ENCODE measurements at regions of chr2 and their contacts with region 1.

Region 1: GRCh38 chr2:109128048-109128465 is 948 bp upstream of the SH3RF3 start:
- DNase-seq: peak; percentile 81
- H3K4me3 ChIP-seq: peak overlapping the region; percentile 84
- H3K27ac ChIP-seq: peak overlapping the region; percentile 38
- H3K27me3 ChIP-seq: peaks cover 2% of the 10 kb centered on the region
- CTCF ChIP-seq: peak; percentile 93

Region 2: DNA sequence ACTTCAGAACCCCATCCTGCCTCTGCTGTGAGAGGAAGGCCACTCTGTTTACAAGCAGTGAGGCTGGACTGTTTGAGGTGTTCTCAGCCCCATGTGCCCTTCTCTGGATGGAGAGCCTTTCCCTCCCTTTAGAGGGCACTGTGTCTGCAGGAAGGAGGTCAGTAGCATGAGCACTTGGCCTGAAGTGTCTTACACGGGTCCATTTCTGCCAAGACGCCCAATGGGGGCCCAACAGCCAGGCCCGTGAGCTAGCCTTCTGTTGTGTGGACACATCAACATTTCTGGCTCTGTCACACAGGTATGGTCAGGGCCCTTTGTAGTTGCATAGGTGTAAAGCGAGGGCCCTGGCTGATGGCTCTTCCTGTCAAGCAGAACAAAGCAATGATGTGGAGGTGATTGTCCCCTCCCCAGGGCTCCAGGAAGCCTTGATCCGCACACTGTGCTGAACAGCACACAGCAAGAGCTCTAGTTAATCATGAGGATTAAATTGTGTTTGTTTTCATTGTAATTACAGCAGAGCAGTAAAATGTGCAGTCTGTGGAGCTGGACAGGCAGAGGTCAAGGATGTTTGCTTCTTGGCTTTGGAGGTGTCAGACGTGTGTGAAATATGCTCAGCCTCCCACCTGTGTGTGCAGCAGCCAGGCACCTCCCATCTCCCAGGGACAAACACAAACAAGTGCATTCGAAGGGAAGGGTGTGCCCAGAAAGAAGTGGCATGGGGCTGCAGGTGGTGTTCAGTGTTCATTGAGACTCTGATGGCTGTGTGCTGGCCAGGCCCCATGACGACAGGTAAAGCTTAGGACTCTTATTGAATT is 133.0 kb after region 1 on chr2:
- in situ Hi-C with region 1: no loop called
- DNase-seq: no peak
- H3K4me3 ChIP-seq: no peak overlapping the region
- H3K27ac ChIP-seq: no peak overlapping the region
- H3K27me3 ChIP-seq: peaks cover 7% of the 10 kb centered on the region
- CTCF ChIP-seq: peak; percentile 62

Region 3: DNA sequence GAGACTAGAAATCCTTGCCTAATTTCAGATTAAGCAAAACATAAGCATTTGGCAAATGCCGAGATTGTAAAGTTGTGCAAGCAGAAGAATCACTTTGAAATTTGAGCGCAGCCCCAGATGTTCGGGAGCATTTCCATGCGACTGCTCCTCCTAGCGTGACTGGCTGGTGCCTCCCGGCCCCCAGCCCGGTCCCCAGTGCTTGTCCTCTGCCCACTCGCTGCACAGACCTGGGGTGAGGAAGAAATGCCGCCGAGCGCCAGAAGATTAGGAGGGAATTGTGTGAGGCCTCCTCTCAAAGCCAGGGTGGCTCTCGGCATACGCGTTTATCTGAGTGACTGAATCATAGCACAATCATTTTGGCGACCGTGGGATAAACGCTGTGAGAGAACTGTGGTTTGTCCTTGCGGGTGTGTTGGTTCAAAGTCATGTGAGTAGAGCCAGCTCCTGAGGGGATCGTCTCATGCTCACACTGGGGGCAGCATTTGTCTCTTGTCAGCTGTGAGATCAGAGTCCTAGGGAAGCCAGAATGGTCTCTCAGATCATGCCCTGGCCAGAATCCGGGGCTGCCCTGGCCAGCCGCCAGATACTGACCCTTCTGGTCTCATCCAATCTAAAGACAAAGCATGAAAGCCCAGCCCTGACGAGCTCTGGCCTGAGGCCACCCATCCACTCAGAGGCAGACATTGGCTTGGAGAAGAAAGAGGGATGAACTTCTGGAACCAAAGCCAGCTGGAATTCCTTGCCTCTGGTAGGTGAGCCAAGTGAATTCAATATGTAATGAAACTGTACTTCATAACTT is 190.3 kb after region 1 on chr2:
- in situ Hi-C with region 1: loop called (anchors 25 kb)
- DNase-seq: peak; percentile 92
- H3K4me3 ChIP-seq: peak overlapping the region; percentile 20
- H3K27ac ChIP-seq: peak overlapping the region; percentile 82
- H3K27me3 ChIP-seq: no peaks in the 10 kb centered on the region
- CTCF ChIP-seq: peak; percentile 34

Region 4: DNA sequence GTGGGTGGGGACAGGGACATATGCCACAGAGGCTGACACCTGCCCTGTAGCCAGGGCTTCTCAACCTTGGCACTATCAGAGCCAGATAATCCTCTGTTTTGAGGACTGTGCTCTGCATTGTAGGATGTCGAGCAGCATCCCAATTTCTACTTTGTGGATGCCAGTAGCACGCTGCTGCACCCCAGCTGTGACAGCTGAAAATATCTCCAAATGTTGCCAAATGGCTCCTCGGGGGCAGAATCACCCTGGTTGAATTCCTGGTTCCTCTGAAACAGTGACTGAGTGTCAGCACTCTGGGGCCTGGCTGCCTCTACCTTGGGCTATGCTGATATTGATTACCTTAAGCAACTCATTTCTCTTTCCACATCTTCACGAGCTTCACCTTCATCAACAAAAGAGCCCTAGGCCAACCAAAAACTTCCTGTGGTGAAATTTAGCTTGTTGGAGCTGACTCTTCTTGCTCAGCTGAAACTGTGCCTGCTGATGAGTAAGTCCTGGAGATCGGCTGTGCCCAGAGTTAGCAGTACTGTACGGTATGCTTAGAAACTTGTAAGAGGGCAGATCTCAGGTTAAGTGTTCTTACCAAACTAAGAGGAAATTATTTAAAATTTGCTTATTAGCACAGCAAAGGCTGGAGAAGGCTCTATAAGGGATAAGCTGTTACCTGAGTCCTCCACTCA is 347.6 kb after region 1 on chr2:
- in situ Hi-C with region 1: loop called (anchors 25 kb)
- DNase-seq: no peak
- H3K4me3 ChIP-seq: no peak overlapping the region
- H3K27ac ChIP-seq: no peak overlapping the region
- H3K27me3 ChIP-seq: no peaks in the 10 kb centered on the region
- CTCF ChIP-seq: no peak

Region 5: GRCh38 chr2:109545828-109546713 is 418.0 kb after region 1 on chr2:
- in situ Hi-C with region 1: no loop called
- DNase-seq: peak; percentile 61
- H3K4me3 ChIP-seq: no peak overlapping the region
- H3K27ac ChIP-seq: no peak overlapping the region
- H3K27me3 ChIP-seq: no peaks in the 10 kb centered on the region
- CTCF ChIP-seq: peak; percentile 93

Measured in brain microvascular endothelial cell (primary cell).